ENCODE measurements at regions of chr6 and their contacts with region 1.

Region 1: DNA sequence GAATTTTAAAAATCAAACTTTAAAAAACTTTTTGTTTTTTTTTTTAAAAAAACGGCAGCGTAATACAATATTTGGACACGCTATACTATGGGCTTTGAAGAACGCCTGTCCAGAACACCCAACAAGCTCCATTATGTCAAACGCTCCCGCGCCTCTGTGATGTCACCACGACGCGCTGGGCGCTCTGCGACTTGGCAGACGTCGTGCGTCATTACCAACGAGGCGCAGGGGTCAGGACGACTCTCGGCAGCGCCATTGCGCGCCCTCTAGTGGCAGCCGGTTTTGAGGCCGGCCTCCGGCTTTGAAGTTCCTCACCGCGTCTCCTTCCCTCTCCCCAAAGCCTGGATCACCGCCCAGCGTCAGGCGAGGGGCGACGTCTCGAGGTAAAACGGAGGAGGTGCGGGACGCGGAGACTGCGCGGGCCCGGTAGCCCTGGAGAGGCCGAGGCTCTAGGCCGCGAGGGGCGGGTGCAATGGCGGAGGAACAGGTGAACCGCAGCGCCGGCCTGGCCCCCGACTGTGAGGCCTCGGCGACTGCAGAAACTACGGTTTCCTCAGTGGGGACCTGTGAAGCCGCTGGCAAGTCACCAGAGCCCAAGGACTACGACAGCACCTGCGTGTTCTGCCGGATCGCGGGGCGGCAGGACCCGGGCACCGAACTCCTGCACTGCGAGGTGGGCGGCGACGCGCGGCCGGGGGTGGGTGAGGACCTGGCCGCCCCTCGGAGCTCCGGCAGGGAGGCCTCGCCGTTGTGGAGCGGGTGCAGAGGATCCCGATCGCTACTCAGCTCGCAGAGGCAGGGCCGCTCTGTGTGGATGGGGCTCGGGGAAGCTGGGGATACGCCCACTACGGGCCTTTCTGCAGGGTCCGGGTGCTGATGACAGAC is at the start of gene HINT3:
- DNase-seq: peak; percentile 99
- ATAC-seq: peak; percentile 74
- H3K4me3 Mint-ChIP-seq: no peak within 1 kb of the TSS
- H3K27ac Mint-ChIP-seq: no peak within 1 kb of the TSS; the same call in none of the 2 replicates
- H3K4me1 Mint-ChIP-seq: peaks cover 4% of the 10 kb centered on the region; the same call in 1 of the 2 replicates
- H3K27me3 Mint-ChIP-seq: no peaks in the 10 kb centered on the region
- CTCF ChIP-seq: peak; percentile 88
- total RNA-seq, gene HINT3: 9.4 to 10.2 TPM (median 9.9 TPM) in 3 replicates

Region 2: DNA sequence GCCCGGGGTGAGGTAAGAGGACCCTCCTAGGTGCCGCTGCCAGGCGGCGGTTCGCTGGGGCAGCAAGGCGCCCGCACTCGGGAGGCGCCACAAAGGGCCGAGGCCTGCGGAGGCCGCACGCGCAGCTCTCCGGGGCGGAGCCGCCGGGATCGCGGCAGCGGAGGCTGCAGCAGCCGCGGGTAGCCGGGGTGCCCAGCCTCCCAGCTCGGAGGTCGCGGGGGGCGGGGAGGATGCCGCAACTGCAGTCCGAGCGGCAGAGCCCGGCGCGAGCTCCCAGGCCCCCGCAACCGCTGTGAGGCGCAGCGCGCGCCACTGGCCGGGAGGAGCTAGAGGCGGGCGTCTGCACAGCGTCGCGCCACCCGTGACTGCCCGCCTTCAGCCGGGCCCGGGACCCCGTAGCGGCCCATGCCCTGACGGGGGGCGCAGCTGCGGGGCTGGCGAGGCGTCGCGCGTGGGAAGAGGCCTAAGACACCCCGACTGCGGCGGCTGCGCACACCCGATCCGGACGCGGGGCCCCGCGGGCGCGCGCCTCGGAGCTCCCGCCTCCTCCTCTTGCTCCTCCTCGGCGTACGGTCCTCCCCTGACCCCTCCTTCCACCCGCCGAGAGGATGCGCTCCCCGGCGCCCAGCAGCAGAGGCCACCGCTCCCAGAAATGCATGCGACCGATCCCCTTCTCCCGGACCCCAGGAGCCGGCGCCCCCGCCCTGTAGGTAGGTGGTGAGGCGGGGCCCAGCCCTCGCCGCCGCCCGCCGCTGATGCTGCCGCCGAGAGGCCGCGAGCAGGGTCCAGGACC is 166.2 kb before region 1 on chr6 and contains the start of gene NCOA7:
- CTCF ChIA-PET with region 1: interaction called, 46 read pairs
- POLR2A ChIA-PET with region 1: interaction called, 14 read pairs
- DNase-seq: peak; percentile 86
- ATAC-seq: peak; percentile 75
- H3K4me3 Mint-ChIP-seq: peak within 1 kb of the TSS; percentile 83
- H3K27ac Mint-ChIP-seq: peak within 1 kb of the TSS; percentile 90
- H3K4me1 Mint-ChIP-seq: peaks cover 43% of the 10 kb centered on the region
- H3K27me3 Mint-ChIP-seq: no peaks in the 10 kb centered on the region
- CTCF ChIP-seq: no peak
- total RNA-seq, gene NCOA7: 9.0 to 14.4 TPM (median 9.9 TPM) in 3 replicates

Region 3: GRCh38 chr6:125888989-125889656 is 67.6 kb before region 1 on chr6:
- CTCF ChIA-PET with region 1: interaction called, 14 read pairs
- POLR2A ChIA-PET with region 1: no interaction called
- DNase-seq: peak; percentile 24
- ATAC-seq: peak; percentile 83
- H3K4me3 Mint-ChIP-seq: no peak overlapping the region
- H3K27ac Mint-ChIP-seq: no peak overlapping the region
- H3K4me1 Mint-ChIP-seq: peaks cover 4% of the 10 kb centered on the region; the same call in 1 of the 2 replicates
- H3K27me3 Mint-ChIP-seq: no peaks in the 10 kb centered on the region
- CTCF ChIP-seq: peak; percentile 42; the same call in 1 of the 2 replicates

Region 4: GRCh38 chr6:125906158-125906998 is 50.4 kb before region 1 on chr6:
- CTCF ChIA-PET with region 1: interaction called, 24 read pairs
- POLR2A ChIA-PET with region 1: no interaction called
- DNase-seq: peak; percentile 80
- ATAC-seq: peak; percentile 98
- H3K4me3 Mint-ChIP-seq: no peak overlapping the region
- H3K27ac Mint-ChIP-seq: no peak overlapping the region
- H3K4me1 Mint-ChIP-seq: peaks cover 2% of the 10 kb centered on the region; the same call in 1 of the 2 replicates
- H3K27me3 Mint-ChIP-seq: no peaks in the 10 kb centered on the region; the same call in 1 of the 2 replicates
- CTCF ChIP-seq: peak; percentile 76

Region 5: GRCh38 chr6:125986300-125987025 is 29.7 kb after region 1 on chr6 and contains the start of gene TRMT11:
- CTCF ChIA-PET with region 1: interaction called, 25 read pairs
- POLR2A ChIA-PET with region 1: interaction called, 11 read pairs
- DNase-seq: peak; percentile 93
- ATAC-seq: peak; percentile 93
- H3K4me3 Mint-ChIP-seq: no peak within 1 kb of the TSS; the same call in 1 of the 2 replicates
- H3K27ac Mint-ChIP-seq: no peak within 1 kb of the TSS
- H3K4me1 Mint-ChIP-seq: peaks cover 5% of the 10 kb centered on the region
- H3K27me3 Mint-ChIP-seq: no peaks in the 10 kb centered on the region
- CTCF ChIP-seq: no peak
- total RNA-seq, gene TRMT11: 27.5 to 32.7 TPM (median 32.3 TPM) in 3 replicates

Region 6: GRCh38 chr6:126824226-126824625 is 867.5 kb after region 1 on chr6:
- CTCF ChIA-PET with region 1: no interaction called
- POLR2A ChIA-PET with region 1: no interaction called
- DNase-seq: no peak
- ATAC-seq: peak; percentile 71; the same call in 1 of the 2 replicates
- H3K4me3 Mint-ChIP-seq: no peak overlapping the region
- H3K27ac Mint-ChIP-seq: no peak overlapping the region
- H3K4me1 Mint-ChIP-seq: peaks cover 14% of the 10 kb centered on the region
- H3K27me3 Mint-ChIP-seq: no peaks in the 10 kb centered on the region
- CTCF ChIP-seq: no peak